Aorta (tissue), 5 donors: ENCODE measurements at regions of chr1 and their contacts with region 1.

Region 1: GRCh38 chr1:30911046-30911954 is 2.7 kb upstream of the SDC3 start:
- DNase-seq: peak; percentile 94 to 95
- ATAC-seq: peak; percentile 82
- H3K4me3 ChIP-seq: no peak overlapping the region
- H3K27ac ChIP-seq: no peak overlapping the region
- H3K4me1 ChIP-seq: no peaks in the 10 kb centered on the region
- H3K27me3 ChIP-seq: no peaks in the 10 kb centered on the region

Region 2: DNA sequence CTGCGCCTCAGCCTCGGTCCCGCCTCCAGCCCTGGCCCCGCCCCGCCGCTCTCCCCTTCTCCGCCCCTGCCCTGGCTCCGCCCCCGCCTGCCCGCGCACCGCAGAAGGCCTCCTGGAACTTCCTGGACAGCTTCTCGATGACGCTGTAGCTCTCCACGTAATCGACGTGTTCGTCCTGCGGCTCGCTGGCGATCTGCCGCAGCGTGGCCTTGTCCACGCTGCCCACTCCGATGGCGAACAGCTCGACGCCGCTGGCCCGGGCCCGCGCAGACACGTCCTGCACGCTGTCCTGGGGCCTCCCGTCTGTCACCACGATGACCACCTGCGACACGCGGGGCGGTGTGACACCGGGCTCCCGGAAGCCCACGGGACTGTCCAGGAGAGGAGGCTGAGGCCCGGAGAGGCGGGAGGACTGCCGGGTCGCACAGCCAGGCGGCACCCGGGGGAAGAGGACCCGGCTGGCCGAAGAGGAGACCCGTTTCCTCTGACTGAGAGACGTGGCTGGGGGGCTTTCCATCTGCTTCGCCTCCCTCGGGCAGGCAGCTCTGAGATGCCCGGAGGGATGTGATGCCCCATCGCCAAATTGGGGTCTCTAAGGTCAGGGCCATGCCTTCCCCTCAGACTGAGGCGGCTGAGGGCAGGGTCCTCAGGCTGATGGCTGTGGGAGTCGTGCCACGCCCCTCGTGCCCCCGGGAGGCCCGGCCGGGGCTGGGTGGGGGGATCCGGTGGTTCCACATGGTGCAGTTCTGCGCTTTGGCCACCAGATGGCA is 192.5 kb before region 1 on chr1:
- intact Hi-C with region 1: loop called in 1 of 2 experiments (anchors 2 kb)
- DNase-seq: peak; percentile 95 to 99
- ATAC-seq: peak; percentile 93
- H3K4me3 ChIP-seq: peak overlapping the region in 1 of 2 donors; percentile 4
- H3K27ac ChIP-seq: peak overlapping the region; percentile 62 to 89
- H3K4me1 ChIP-seq: no peaks in the 10 kb centered on the region
- H3K27me3 ChIP-seq: no peaks in the 10 kb centered on the region

Region 3: GRCh38 chr1:30727824-30728223 is 183.5 kb before region 1 on chr1:
- intact Hi-C with region 1: loop called in 1 of 2 experiments (anchors 5 kb)
- DNase-seq: no peak
- ATAC-seq: no peak
- H3K4me3 ChIP-seq: no peak overlapping the region
- H3K27ac ChIP-seq: no peak overlapping the region
- H3K4me1 ChIP-seq: no peaks in the 10 kb centered on the region
- H3K27me3 ChIP-seq: no peaks in the 10 kb centered on the region

Region 4: DNA sequence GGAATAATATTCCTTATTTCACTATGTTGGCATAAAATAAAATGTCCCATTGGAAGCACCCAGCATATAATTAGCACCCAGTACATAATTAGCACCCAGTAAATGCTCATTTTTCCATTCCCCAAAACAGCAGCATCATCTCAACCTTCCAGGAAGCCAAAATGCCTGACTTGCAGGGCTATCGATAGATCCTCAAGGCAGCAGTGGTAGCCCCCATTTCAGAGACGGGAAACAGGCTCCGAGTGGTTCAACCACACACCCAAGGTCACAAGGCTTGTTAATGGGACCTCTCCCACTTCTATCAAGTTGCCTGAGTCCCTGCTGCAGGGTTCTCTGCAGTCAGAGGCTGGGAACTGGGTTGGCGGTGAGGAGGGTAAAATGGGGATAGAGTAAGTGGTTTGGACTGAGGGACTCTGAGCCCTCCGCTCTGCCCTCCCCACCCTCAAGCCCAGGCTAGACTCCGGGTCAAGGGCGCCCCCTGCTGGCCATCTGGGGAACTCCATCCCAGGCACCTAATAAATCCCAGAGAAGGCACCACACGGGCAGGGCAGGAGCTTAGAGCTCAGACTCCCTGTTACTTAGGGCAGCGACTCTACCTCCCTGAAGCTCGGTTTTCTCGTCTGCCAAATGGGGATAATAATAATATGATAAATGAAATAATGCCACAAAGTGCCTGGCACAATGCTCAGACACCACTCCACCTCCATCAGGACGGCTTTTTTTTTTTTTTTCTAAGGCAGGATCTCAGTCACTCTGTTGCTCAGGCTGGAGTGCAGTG is 131.8 kb before region 1 on chr1:
- intact Hi-C with region 1: loop called (anchors 1 to 5 kb)
- DNase-seq: peak; percentile 88 to 97
- ATAC-seq: peak; percentile 80
- H3K4me3 ChIP-seq: no peak overlapping the region
- H3K27ac ChIP-seq: no peak overlapping the region
- H3K4me1 ChIP-seq: no peaks in the 10 kb centered on the region
- H3K27me3 ChIP-seq: no peaks in the 10 kb centered on the region

Region 5: DNA sequence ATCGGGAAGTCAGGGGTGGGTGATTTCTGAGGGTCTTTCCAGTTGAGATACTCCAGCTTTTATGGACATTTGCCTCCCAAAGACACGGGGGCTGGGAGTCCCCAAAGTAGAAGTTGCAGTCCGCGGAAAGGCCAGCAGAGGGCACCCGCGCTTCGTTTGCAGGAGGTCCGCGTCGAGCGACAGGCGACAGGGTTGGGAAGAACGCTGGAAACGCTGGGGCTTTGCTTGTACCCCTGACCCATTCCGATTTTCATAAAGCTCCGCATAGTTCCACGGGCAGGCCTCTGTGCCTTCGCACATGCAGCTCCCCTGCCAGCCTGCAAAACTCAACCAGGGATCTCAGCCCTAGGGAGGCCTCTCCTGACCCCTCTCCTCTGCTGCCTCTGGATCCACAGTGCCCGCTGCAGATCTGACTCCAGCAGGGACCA is 109.5 kb before region 1 on chr1:
- intact Hi-C with region 1: loop called (anchors 1 kb)
- DNase-seq: peak; percentile 86 to 95
- ATAC-seq: peak; percentile 83
- H3K4me3 ChIP-seq: no peak overlapping the region
- H3K27ac ChIP-seq: no peak overlapping the region
- H3K4me1 ChIP-seq: no peaks in the 10 kb centered on the region
- H3K27me3 ChIP-seq: no peaks in the 10 kb centered on the region

Region 6: GRCh38 chr1:30823969-30824735 is 87.1 kb before region 1 on chr1:
- intact Hi-C with region 1: loop called in 1 of 2 experiments (anchors 5 kb)
- DNase-seq: peak; percentile 97
- ATAC-seq: peak; percentile 97
- H3K4me3 ChIP-seq: no peak overlapping the region
- H3K27ac ChIP-seq: peak overlapping the region; percentile 62 to 99
- H3K4me1 ChIP-seq: peaks cover 0 to 3% of the 10 kb centered on the region in 2 donors
- H3K27me3 ChIP-seq: no peaks in the 10 kb centered on the region

Region 7: GRCh38 chr1:31196685-31197084 is 285.4 kb after region 1 on chr1:
- intact Hi-C with region 1: no loop called
- DNase-seq: no peak
- ATAC-seq: no peak
- H3K4me3 ChIP-seq: no peak overlapping the region
- H3K27ac ChIP-seq: no peak overlapping the region
- H3K4me1 ChIP-seq: no peaks in the 10 kb centered on the region
- H3K27me3 ChIP-seq: no peaks in the 10 kb centered on the region